Sigmoid colon (tissue), 7 donors: ENCODE measurements at regions of chr7 and their contacts with region 1.

Region 1: GRCh38 chr7:94295850-94296249 is 98.8 kb upstream of the COL1A2 start:
- DNase-seq: no peak
- H3K4me3 ChIP-seq: peak overlapping the region in 3 of 4 donors; percentile 22 to 40 (median 32)
- H3K27ac ChIP-seq: peak overlapping the region; percentile 78 to 93 (median 88)
- H3K4me1 ChIP-seq: peaks cover 0 to 54% (median 32%) of the 10 kb centered on the region in 4 donors
- H3K27me3 ChIP-seq: no peaks in the 10 kb centered on the region
- CTCF ChIP-seq: peak; percentile 56 to 82 (median 68)
- EP300 ChIP-seq: peak in 1 of 4 donors; percentile 15
- POLR2A ChIP-seq: no peak

Region 2: GRCh38 chr7:94374231-94374630 is 78.4 kb after region 1 on chr7:
- intact Hi-C with region 1: loop called (anchors 2 kb)
- DNase-seq: peak; percentile 94
- H3K4me3 ChIP-seq: peak overlapping the region in 3 of 4 donors; percentile 24 to 35 (median 29)
- H3K27ac ChIP-seq: peak overlapping the region; percentile 86 to 95 (median 86)
- H3K4me1 ChIP-seq: peaks cover 0 to 60% (median 39%) of the 10 kb centered on the region in 4 donors
- H3K27me3 ChIP-seq: no peaks in the 10 kb centered on the region
- CTCF ChIP-seq: no peak
- EP300 ChIP-seq: no peak
- POLR2A ChIP-seq: peak; percentile 75 to 86